BJ (cell line): ENCODE measurements at regions of chr4 and their contacts with region 1.

Region 1: GRCh38 chr4:40316782-40317635 is 18.1 kb upstream of the CHRNA9 start:
- DNase-seq: peak; percentile 82
- H3K4me3 ChIP-seq: peak overlapping the region; percentile 16
- H3K27me3 ChIP-seq: no peaks in the 10 kb centered on the region
- CTCF ChIP-seq: peak; percentile 81

Region 2: GRCh38 chr4:40333921-40334352 is 16.9 kb after region 1 on chr4:
- CTCF ChIA-PET with region 1: interaction called, 15 read pairs
- POLR2A ChIA-PET with region 1: interaction called, 3 read pairs
- DNase-seq: peak; percentile 46
- H3K4me3 ChIP-seq: no peak overlapping the region
- H3K27me3 ChIP-seq: 0 out of 2 replicates have a peak, but pooled peaks cover 1% of the 10 kb centered on the region
- CTCF ChIP-seq: no peak

Region 3: DNA sequence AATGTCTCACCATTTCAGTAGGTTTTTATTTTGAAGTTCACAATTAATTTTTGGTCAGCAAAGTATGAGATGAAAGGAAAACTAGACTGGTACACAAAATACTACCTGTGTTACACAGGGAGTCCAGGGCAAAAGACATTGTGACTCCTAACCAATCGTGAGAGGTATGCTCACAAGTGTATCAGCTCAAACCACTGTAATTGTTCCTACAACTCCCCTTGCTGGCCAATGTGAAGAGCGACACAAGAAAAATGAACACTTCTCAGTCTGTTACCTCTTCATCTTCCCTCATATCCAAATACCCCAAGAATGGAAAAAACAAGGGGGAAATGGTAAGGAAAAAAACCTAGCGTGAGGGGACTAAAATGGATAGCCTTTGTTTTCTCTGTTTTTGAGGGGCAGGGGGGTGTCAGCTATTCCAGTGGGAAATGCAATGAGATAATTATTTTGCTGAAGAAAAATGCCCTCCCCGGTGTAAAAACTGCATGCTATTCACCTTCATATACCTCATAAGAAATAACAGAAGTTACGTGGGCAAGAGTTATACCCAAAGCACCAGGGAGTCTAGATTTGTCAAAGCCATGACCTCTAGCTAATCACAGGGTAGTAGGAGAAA is 402.1 kb after region 1 on chr4:
- CTCF ChIA-PET with region 1: interaction called, 16 read pairs
- POLR2A ChIA-PET with region 1: no interaction called
- DNase-seq: no peak
- H3K4me3 ChIP-seq: no peak overlapping the region
- H3K27me3 ChIP-seq: peaks cover 4% of the 10 kb centered on the region
- CTCF ChIP-seq: peak; percentile 62